A549 (cell line): ENCODE measurements at regions of chr3 and their contacts with region 1.

Region 1: GRCh38 chr3:189324538-189325138 is 152.9 kb downstream of the TPRG1 start:
- DNase-seq: peak; percentile 62 to 98
- ATAC-seq: peak; percentile 91 to 97
- H3K4me3 ChIP-seq: no peak overlapping the region
- H3K27ac ChIP-seq: peak overlapping the region; percentile 76 to 89
- H3K4me1 ChIP-seq: peaks cover 31% of the 10 kb centered on the region
- CTCF ChIP-seq: no peak
- EP300 ChIP-seq: peak; percentile 90 to 94
- POLR2A ChIP-seq: no peak
- RAD21 ChIP-seq: peak; percentile 4 to 72; a peak in 4 of 5 replicates

Region 2: GRCh38 chr3:189304446-189305351 is 19.9 kb before region 1 on chr3:
- CTCF ChIA-PET with region 1: interaction called, 4 read pairs
- POLR2A ChIA-PET with region 1: interaction called, 13 read pairs
- DNase-seq: peak; percentile 72 to 95
- ATAC-seq: peak; percentile 95 to 97
- H3K4me3 ChIP-seq: no peak overlapping the region
- H3K27ac ChIP-seq: peak overlapping the region; percentile 88 to 95
- H3K4me1 ChIP-seq: peaks cover 36% of the 10 kb centered on the region
- CTCF ChIP-seq: no peak
- EP300 ChIP-seq: peak; percentile 84 to 90; a peak in 4 of 5 replicates
- POLR2A ChIP-seq: no peak
- RAD21 ChIP-seq: peak; percentile 6 to 37; a peak in 2 of 5 replicates

Region 3: GRCh38 chr3:189355481-189356201 is 31.0 kb after region 1 on chr3:
- CTCF ChIA-PET with region 1: no interaction called
- POLR2A ChIA-PET with region 1: interaction called, 27 read pairs
- DNase-seq: peak; percentile 31 to 89
- ATAC-seq: peak; percentile 81 to 85
- H3K4me3 ChIP-seq: no peak overlapping the region
- H3K27ac ChIP-seq: peak overlapping the region; percentile 93 to 94
- H3K4me1 ChIP-seq: peaks cover 48% of the 10 kb centered on the region
- CTCF ChIP-seq: no peak
- EP300 ChIP-seq: peak in 1 of 2 experiments; percentile 53; a peak in 3 of 5 replicates
- POLR2A ChIP-seq: no peak
- RAD21 ChIP-seq: no peak

Region 4: GRCh38 chr3:189446959-189447560 is 122.4 kb after region 1 on chr3:
- CTCF ChIA-PET with region 1: no interaction called
- POLR2A ChIA-PET with region 1: no interaction called
- DNase-seq: no peak
- ATAC-seq: no peak
- H3K4me3 ChIP-seq: no peak overlapping the region
- H3K27ac ChIP-seq: no peak overlapping the region
- H3K4me1 ChIP-seq: 0 out of 3 replicates have a peak, but pooled peaks cover 4% of the 10 kb centered on the region
- CTCF ChIP-seq: no peak
- EP300 ChIP-seq: no peak
- POLR2A ChIP-seq: no peak
- RAD21 ChIP-seq: no peak

Region 5: GRCh38 chr3:189488241-189488767 is 163.7 kb after region 1 on chr3:
- CTCF ChIA-PET with region 1: no interaction called
- POLR2A ChIA-PET with region 1: no interaction called
- DNase-seq: peak in 1 of 2 experiments; percentile 33
- ATAC-seq: peak; percentile 76 to 87; a peak in 5 of 6 replicates
- H3K4me3 ChIP-seq: no peak overlapping the region
- H3K27ac ChIP-seq: peak overlapping the region; percentile 34 to 48; a peak in 5 of 6 replicates
- H3K4me1 ChIP-seq: peaks cover 26% of the 10 kb centered on the region
- CTCF ChIP-seq: no peak
- EP300 ChIP-seq: no peak
- POLR2A ChIP-seq: no peak
- RAD21 ChIP-seq: no peak